Activated CD4-positive, alpha-beta memory T cell treated with anti-CD3 and anti-CD28 coated beads for 36 hours (primary cell): ENCODE measurements at regions of chr20 and their contacts with region 1.

Region 1: GRCh38 chr20:49166534-49167449 is 21.3 kb downstream of the STAU1 start:
- DNase-seq: no peak
- H3K4me3 Mint-ChIP-seq: peak overlapping the region; percentile 41
- H3K27ac Mint-ChIP-seq: peak overlapping the region; percentile 84
- H3K4me1 Mint-ChIP-seq: peaks cover 61% of the 10 kb centered on the region
- H3K27me3 Mint-ChIP-seq: no peaks in the 10 kb centered on the region

Region 2: GRCh38 chr20:49179368-49180277 is 12.8 kb after region 1 on chr20:
- CTCF ChIA-PET with region 1: interaction called, 10 read pairs
- POLR2A ChIA-PET with region 1: interaction called, 5 read pairs
- intact Hi-C with region 1: no loop called
- DNase-seq: no peak
- H3K4me3 Mint-ChIP-seq: no peak overlapping the region
- H3K27ac Mint-ChIP-seq: no peak overlapping the region
- H3K4me1 Mint-ChIP-seq: peaks cover 56% of the 10 kb centered on the region
- H3K27me3 Mint-ChIP-seq: no peaks in the 10 kb centered on the region

Region 3: DNA sequence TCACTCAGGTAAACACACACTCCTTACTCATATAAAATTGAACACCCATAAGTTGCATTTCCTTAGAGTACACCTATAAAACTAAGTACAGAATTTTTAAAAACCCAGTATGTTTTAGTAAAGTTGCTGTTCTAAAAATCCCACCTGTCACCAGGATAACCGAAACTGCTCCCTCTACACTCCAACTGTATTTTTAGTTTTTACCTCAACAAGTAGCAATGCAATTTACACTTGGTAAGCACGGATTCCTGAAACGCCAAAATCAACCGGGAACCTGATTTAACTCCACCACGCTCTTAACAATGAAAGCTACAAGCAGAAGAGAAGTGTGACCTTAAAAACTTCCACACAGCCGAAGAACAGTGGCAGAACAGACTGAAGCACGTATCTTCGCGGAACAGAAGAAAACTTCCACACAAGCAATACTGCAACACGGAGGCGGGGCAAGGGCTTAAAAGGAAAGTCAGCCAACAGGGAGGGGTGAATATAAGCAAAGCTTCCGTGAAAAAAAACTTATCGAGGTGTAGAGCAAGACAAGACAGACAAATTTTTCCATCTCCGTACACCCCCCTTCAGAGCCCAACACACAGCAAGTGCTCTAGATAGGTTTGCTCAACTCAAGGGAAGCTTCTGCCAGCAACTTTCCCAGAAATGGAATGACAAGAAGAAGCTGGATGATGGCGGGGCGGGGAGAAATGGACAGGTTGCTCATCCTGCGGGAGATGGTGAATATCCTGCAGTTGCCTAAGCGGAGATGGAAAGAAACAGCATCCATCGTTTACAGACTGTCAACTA is 19.9 kb after region 1 on chr20:
- CTCF ChIA-PET with region 1: interaction called, 7 read pairs
- POLR2A ChIA-PET with region 1: interaction called, 26 read pairs
- intact Hi-C with region 1: loop called (anchors 1 kb)
- DNase-seq: peak; percentile 79
- H3K4me3 Mint-ChIP-seq: peak overlapping the region; percentile 87
- H3K27ac Mint-ChIP-seq: peak overlapping the region; percentile 89
- H3K4me1 Mint-ChIP-seq: peaks cover 48% of the 10 kb centered on the region
- H3K27me3 Mint-ChIP-seq: no peaks in the 10 kb centered on the region

Region 4: DNA sequence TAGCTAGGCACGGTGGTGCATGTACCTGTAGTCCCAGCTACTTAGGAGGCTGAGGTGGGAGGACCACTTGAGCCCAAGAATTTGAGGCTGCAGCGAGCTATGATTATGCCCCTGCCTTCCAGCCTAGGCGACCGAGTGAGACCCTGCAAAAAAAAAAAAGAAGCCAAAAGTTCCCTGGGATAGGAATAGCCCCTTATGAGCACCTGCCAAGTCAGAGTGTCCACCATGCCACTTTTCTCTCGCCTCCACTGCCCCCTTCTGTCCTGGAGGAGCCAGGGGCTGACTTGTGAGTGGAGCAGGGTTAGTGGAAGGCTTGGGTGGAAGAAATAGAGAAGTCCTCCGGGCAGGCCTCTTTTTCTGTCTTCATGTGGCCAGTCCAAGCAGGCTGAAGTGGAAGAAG is 40.3 kb after region 1 on chr20:
- CTCF ChIA-PET with region 1: no interaction called
- POLR2A ChIA-PET with region 1: no interaction called
- intact Hi-C with region 1: no loop called
- DNase-seq: peak; percentile 46
- H3K4me3 Mint-ChIP-seq: no peak overlapping the region
- H3K27ac Mint-ChIP-seq: no peak overlapping the region
- H3K4me1 Mint-ChIP-seq: no peaks in the 10 kb centered on the region
- H3K27me3 Mint-ChIP-seq: no peaks in the 10 kb centered on the region

Region 5: DNA sequence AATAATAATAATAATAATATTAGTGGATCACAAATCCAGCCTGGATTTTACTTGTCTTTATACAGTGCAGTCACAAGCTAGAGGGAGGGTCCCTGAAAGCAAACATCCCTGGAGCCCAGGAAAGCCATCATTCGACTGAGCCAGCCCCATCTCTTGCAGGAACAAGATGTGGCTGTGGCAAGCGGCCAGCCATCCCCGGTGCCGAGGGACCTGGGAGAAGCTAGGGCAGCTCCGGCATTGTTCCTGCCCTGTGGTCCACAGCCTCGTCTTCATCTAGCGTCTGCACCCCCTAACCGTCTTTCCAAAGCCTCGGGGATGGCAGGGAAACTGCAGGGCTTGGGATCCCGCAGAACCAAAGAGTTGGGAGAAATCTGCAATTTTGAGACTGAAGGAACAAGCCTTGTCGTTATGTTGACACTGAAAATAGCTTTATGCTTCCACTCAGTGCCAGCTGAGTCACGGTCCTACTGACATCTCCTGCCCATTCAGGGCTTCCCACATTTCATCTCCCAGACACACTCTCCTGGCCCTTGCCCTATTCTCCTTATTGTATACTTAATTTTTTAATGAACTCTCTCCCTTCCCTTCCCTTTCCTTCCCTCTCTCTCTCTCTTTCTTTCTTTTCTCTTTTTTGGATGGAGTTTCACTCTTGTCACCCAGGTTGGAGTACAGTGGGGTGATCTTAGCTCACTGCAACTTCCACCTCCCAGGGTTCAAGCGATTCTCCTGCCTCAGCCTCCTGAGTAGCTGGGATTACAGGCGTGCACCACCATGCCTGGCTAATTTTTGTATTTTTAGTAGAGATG is 173.6 kb after region 1 on chr20:
- CTCF ChIA-PET with region 1: no interaction called
- POLR2A ChIA-PET with region 1: no interaction called
- intact Hi-C with region 1: no loop called
- DNase-seq: no peak
- H3K4me3 Mint-ChIP-seq: no peak overlapping the region
- H3K27ac Mint-ChIP-seq: no peak overlapping the region
- H3K4me1 Mint-ChIP-seq: no peaks in the 10 kb centered on the region
- H3K27me3 Mint-ChIP-seq: peaks cover 9% of the 10 kb centered on the region

Region 6: GRCh38 chr20:49356676-49357075 is 189.9 kb after region 1 on chr20:
- CTCF ChIA-PET with region 1: no interaction called
- POLR2A ChIA-PET with region 1: no interaction called
- intact Hi-C with region 1: no loop called
- DNase-seq: no peak
- H3K4me3 Mint-ChIP-seq: no peak overlapping the region
- H3K27ac Mint-ChIP-seq: no peak overlapping the region
- H3K4me1 Mint-ChIP-seq: no peaks in the 10 kb centered on the region
- H3K27me3 Mint-ChIP-seq: peaks cover 5% of the 10 kb centered on the region